Panc1 (cell line): ENCODE measurements at regions of chr7 and their contacts with region 1.

Region 1: DNA sequence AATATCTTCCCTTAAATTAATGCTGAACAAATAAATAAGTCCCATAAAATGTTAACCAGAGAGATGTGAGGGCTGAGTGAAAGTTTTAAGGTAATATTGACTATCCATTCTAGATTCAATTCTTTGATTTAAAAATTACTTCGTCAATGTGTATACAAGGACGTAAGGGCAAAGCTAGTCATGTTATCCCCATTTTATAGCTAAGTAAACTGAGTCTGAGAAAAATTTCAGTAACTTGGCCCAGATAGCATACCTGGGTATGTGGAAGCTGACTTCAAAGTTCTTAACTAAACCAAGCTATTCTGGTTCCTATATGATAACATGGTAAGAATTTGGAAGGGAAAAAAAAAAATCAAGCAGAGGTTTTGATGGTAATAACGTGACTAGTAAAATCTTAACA is 72.4 kb downstream of the CADPS2 start:
- DNase-seq: no peak
- ATAC-seq: no peak
- H3K4me3 ChIP-seq: no peak overlapping the region
- H3K27ac ChIP-seq: no peak overlapping the region
- H3K4me1 ChIP-seq: no peaks in the 10 kb centered on the region
- H3K27me3 ChIP-seq: no peaks in the 10 kb centered on the region
- CTCF ChIP-seq: no peak

Region 2: GRCh38 chr7:122803323-122803722 is 10.5 kb before region 1 on chr7:
- CTCF ChIA-PET with region 1: no interaction called
- POLR2A ChIA-PET with region 1: interaction called, 10 read pairs
- in situ Hi-C with region 1: no loop called
- intact Hi-C with region 1: no loop called
- DNase-seq: no peak
- ATAC-seq: no peak
- H3K4me3 ChIP-seq: no peak overlapping the region
- H3K27ac ChIP-seq: no peak overlapping the region
- H3K4me1 ChIP-seq: no peaks in the 10 kb centered on the region
- H3K27me3 ChIP-seq: no peaks in the 10 kb centered on the region
- CTCF ChIP-seq: peak; percentile 26; the same call in 1 of the 2 replicates